CD4-positive, alpha-beta T cell (primary cell): ENCODE measurements at regions of chr1 and their contacts with region 1.

Region 1: GRCh38 chr1:89274411-89274857 is 1.8 kb upstream of the GBP5 start:
- DNase-seq: peak in 3 of 14 experiments; percentile 78 to 81 (median 78)
- ATAC-seq: no peak
- H3K4me3 ChIP-seq: peak overlapping the region; percentile 24
- H3K4me3 Mint-ChIP-seq: peak overlapping the region; percentile 87
- H3K27ac ChIP-seq: peak overlapping the region; percentile 24 to 55
- H3K27ac Mint-ChIP-seq: peak overlapping the region; percentile 85
- H3K4me1 ChIP-seq: peaks cover 48% of the 10 kb centered on the region
- H3K4me1 Mint-ChIP-seq: peaks cover 83% of the 10 kb centered on the region
- H3K27me3 ChIP-seq: no peaks in the 10 kb centered on the region
- H3K27me3 Mint-ChIP-seq: no peaks in the 10 kb centered on the region
- CTCF ChIP-seq: no peak

Region 2: GRCh38 chr1:87379306-87379705 is 1895.1 kb before region 1 on chr1:
- CTCF ChIA-PET with region 1: no interaction called
- POLR2A ChIA-PET with region 1: no interaction called
- intact Hi-C with region 1: no loop called
- DNase-seq: no peak
- ATAC-seq: no peak
- H3K4me3 ChIP-seq: no peak overlapping the region
- H3K4me3 Mint-ChIP-seq: no peak overlapping the region
- H3K27ac ChIP-seq: no peak overlapping the region
- H3K27ac Mint-ChIP-seq: no peak overlapping the region
- H3K4me1 ChIP-seq: no peaks in the 10 kb centered on the region
- H3K4me1 Mint-ChIP-seq: no peaks in the 10 kb centered on the region
- H3K27me3 ChIP-seq: no peaks in the 10 kb centered on the region
- H3K27me3 Mint-ChIP-seq: peaks cover 10% of the 10 kb centered on the region
- CTCF ChIP-seq: no peak

Region 3: DNA sequence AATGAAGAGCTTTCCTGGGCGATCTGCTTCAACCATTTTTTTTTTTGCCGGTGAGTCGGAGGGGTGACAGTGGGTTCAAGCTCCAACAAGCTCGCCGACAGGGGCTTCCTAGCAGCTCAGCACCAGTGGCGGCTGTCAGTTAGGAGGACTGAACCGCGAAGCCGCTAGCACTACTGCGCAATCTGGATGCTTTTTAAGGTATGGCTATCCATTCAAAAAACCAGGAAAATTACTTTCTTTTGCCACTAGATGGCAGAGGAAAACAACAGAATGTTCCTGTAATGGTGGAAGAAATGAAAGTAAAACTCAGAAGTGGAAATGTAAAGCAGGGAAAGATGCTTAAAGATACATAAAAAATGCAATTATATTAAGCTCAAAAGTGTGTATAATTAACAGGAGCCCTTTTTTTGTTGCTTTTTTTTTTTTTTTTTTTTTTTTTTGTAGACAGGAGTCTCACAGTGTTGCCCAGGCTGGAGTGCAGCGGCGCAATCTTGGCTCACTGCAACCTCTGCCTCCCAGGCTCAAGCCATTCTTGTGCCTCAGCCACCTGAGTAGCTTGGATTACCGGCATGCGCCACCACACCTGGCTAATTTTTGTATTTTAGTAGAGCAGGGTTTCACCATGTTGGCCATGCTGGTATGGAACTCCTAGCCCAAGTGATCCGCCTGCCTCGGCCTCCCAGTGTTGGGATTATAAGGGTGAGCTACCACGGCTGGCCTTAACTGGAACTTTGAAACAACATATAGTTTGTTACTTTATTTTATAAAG is 290.5 kb before region 1 on chr1:
- CTCF ChIA-PET with region 1: no interaction called
- POLR2A ChIA-PET with region 1: no interaction called
- intact Hi-C with region 1: loop called in 1 of 2 experiments (anchors 5 kb)
- DNase-seq: peak in 6 of 14 experiments; percentile 23 to 82 (median 60)
- ATAC-seq: peak; percentile 88
- H3K4me3 ChIP-seq: peak overlapping the region; percentile 9
- H3K4me3 Mint-ChIP-seq: peak overlapping the region; percentile 8
- H3K27ac ChIP-seq: no peak overlapping the region
- H3K27ac Mint-ChIP-seq: peak overlapping the region; percentile 48
- H3K4me1 ChIP-seq: peaks cover 12% of the 10 kb centered on the region
- H3K4me1 Mint-ChIP-seq: peaks cover 72% of the 10 kb centered on the region
- H3K27me3 ChIP-seq: no peaks in the 10 kb centered on the region
- H3K27me3 Mint-ChIP-seq: no peaks in the 10 kb centered on the region
- CTCF ChIP-seq: peak; percentile 81

Region 4: DNA sequence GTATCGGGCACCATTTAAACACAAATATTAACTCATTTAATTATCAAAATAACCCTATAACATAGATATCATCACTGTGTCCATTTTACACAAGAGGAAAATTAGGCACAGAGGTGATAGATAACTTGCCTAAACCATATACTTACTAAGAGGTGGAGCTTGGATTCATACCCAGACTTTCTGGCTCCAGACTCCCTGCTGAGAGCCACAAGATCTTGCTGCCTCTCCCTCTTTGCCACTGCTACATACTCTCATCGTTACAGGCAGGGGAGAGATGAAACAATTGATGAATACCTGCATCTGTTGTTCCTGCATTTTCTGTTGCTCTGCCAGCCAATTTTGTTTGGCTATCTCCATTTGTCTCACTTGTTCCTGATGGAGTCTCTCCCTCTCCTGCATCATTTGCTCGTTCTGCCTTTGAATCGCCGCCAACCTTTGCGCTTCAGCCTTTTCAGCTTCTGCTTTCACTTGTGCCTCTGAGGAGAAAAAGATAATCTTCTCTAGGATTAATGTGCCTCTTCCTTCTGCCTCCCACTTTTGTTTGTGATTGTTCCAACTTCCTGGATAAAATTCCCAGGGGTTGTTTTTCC is 12.4 kb before region 1 on chr1:
- CTCF ChIA-PET with region 1: no interaction called
- POLR2A ChIA-PET with region 1: interaction called, 76 read pairs
- intact Hi-C with region 1: loop called in 1 of 2 experiments (anchors 1 kb)
- DNase-seq: no peak
- ATAC-seq: no peak
- H3K4me3 ChIP-seq: no peak overlapping the region
- H3K4me3 Mint-ChIP-seq: no peak overlapping the region
- H3K27ac ChIP-seq: no peak overlapping the region
- H3K27ac Mint-ChIP-seq: peak overlapping the region; percentile 15
- H3K4me1 ChIP-seq: peaks cover 35% of the 10 kb centered on the region
- H3K4me1 Mint-ChIP-seq: peaks cover 66% of the 10 kb centered on the region
- H3K27me3 ChIP-seq: no peaks in the 10 kb centered on the region
- H3K27me3 Mint-ChIP-seq: no peaks in the 10 kb centered on the region
- CTCF ChIP-seq: no peak

Region 5: GRCh38 chr1:89286549-89287180 is 12.2 kb after region 1 on chr1:
- CTCF ChIA-PET with region 1: no interaction called
- POLR2A ChIA-PET with region 1: interaction called, 154 read pairs
- intact Hi-C with region 1: loop called in 1 of 2 experiments (anchors 1 kb)
- DNase-seq: peak in 3 of 14 experiments; percentile 39 to 82 (median 48)
- ATAC-seq: peak; percentile 76
- H3K4me3 ChIP-seq: peak overlapping the region; percentile 28
- H3K4me3 Mint-ChIP-seq: peak overlapping the region; percentile 62
- H3K27ac ChIP-seq: peak overlapping the region; percentile 53 to 54
- H3K27ac Mint-ChIP-seq: peak overlapping the region; percentile 78
- H3K4me1 ChIP-seq: peaks cover 45% of the 10 kb centered on the region
- H3K4me1 Mint-ChIP-seq: peaks cover 61% of the 10 kb centered on the region
- H3K27me3 ChIP-seq: no peaks in the 10 kb centered on the region
- H3K27me3 Mint-ChIP-seq: no peaks in the 10 kb centered on the region
- CTCF ChIP-seq: no peak

Region 6: DNA sequence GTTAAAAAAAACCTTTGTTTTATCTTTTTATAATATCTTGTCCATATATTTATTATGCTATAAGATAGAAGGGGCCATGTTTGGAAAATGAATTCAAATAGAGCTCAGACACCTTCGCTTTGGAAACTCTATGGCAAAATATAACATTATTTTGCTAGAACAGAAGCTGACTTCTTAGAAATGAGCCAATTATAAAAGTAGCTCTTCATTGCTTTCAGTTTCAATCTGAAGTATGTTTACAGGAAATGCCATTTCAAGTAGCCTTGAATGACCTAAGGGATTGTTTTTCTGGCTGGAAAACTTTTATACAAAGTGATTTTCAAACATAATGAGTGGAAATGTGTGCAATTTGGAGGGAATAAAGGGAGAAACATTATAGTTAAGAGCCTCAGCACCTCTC is 36.1 kb after region 1 on chr1:
- CTCF ChIA-PET with region 1: no interaction called
- POLR2A ChIA-PET with region 1: interaction called, 64 read pairs
- intact Hi-C with region 1: loop called in 1 of 2 experiments (anchors 5 kb)
- DNase-seq: peak in 3 of 14 experiments; percentile 14 to 80 (median 27)
- ATAC-seq: peak; percentile 52
- H3K4me3 ChIP-seq: peak overlapping the region; percentile 11
- H3K4me3 Mint-ChIP-seq: peak overlapping the region; percentile 47
- H3K27ac ChIP-seq: peak overlapping the region; percentile 24 to 38
- H3K27ac Mint-ChIP-seq: peak overlapping the region; percentile 78
- H3K4me1 ChIP-seq: peaks cover 31% of the 10 kb centered on the region
- H3K4me1 Mint-ChIP-seq: peaks cover 42% of the 10 kb centered on the region
- H3K27me3 ChIP-seq: no peaks in the 10 kb centered on the region
- H3K27me3 Mint-ChIP-seq: no peaks in the 10 kb centered on the region
- CTCF ChIP-seq: no peak